Esophagus muscularis mucosa (tissue), 4 donors: ENCODE measurements at regions of chr5 and their contacts with region 1.

Region 1: GRCh38 chr5:172697123-172698121 is 56.4 kb downstream of the NEURL1B start:
- DNase-seq: peak; percentile 96
- H3K4me3 ChIP-seq: peak overlapping the region; percentile 46 to 79 (median 70)
- H3K27ac ChIP-seq: peak overlapping the region; percentile 70 to 84 (median 79)
- H3K4me1 ChIP-seq: peaks cover 64 to 76% (median 69%) of the 10 kb centered on the region in 4 donors
- H3K27me3 ChIP-seq: no peaks in the 10 kb centered on the region
- CTCF ChIP-seq: peak; percentile 92 to 95 (median 95)
- EP300 ChIP-seq: no peak
- POLR2A ChIP-seq: no peak

Region 2: GRCh38 chr5:172463031-172463430 is 234.4 kb before region 1 on chr5:
- intact Hi-C with region 1: loop called (anchors 5 kb)
- DNase-seq: no peak
- H3K4me3 ChIP-seq: no peak overlapping the region
- H3K27ac ChIP-seq: no peak overlapping the region
- H3K4me1 ChIP-seq: peaks cover 0 to 7% (median 0%) of the 10 kb centered on the region in 4 donors
- H3K27me3 ChIP-seq: no peaks in the 10 kb centered on the region
- CTCF ChIP-seq: no peak
- EP300 ChIP-seq: no peak
- POLR2A ChIP-seq: no peak

Region 3: GRCh38 chr5:172479044-172479783 is 218.2 kb before region 1 on chr5:
- intact Hi-C with region 1: loop called (anchors 1 kb)
- DNase-seq: no peak
- H3K4me3 ChIP-seq: no peak overlapping the region
- H3K27ac ChIP-seq: peak overlapping the region; percentile 44 to 58 (median 44)
- H3K4me1 ChIP-seq: peaks cover 9 to 14% (median 9%) of the 10 kb centered on the region in 4 donors
- H3K27me3 ChIP-seq: no peaks in the 10 kb centered on the region
- CTCF ChIP-seq: peak; percentile 78 to 98 (median 80)
- EP300 ChIP-seq: no peak
- POLR2A ChIP-seq: no peak

Region 4: GRCh38 chr5:172502969-172503368 is 194.5 kb before region 1 on chr5:
- intact Hi-C with region 1: no loop called
- DNase-seq: peak; percentile 91
- H3K4me3 ChIP-seq: no peak overlapping the region
- H3K27ac ChIP-seq: peak overlapping the region; percentile 43 to 76 (median 60)
- H3K4me1 ChIP-seq: peaks cover 14 to 23% (median 18%) of the 10 kb centered on the region in 4 donors
- H3K27me3 ChIP-seq: no peaks in the 10 kb centered on the region
- CTCF ChIP-seq: no peak
- EP300 ChIP-seq: no peak
- POLR2A ChIP-seq: no peak

Region 5: GRCh38 chr5:172640822-172641358 is 56.5 kb before region 1 on chr5 and contains the start of gene NEURL1B:
- intact Hi-C with region 1: loop called (anchors 2 kb)
- DNase-seq: no peak
- H3K4me3 ChIP-seq: peak within 1 kb of the TSS; percentile 68 to 98 (median 92)
- H3K27ac ChIP-seq: peak within 1 kb of the TSS; percentile 83 to 96 (median 94)
- H3K4me1 ChIP-seq: peaks cover 16 to 72% (median 65%) of the 10 kb centered on the region in 4 donors
- H3K27me3 ChIP-seq: no peaks in the 10 kb centered on the region
- CTCF ChIP-seq: peak in 2 of 3 experiments; percentile 21 to 43
- EP300 ChIP-seq: no peak
- POLR2A ChIP-seq: no peak
- total RNA-seq, gene NEURL1B: 34.1 to 87.1 (median 60.2) TPM

Region 6: GRCh38 chr5:172740428-172741201 is 43.2 kb after region 1 on chr5:
- intact Hi-C with region 1: no loop called
- DNase-seq: no peak
- H3K4me3 ChIP-seq: peak overlapping the region in 1 of 4 donors; percentile 12
- H3K27ac ChIP-seq: peak overlapping the region; percentile 90 to 98 (median 96)
- H3K4me1 ChIP-seq: peaks cover 31 to 82% (median 64%) of the 10 kb centered on the region in 4 donors
- H3K27me3 ChIP-seq: no peaks in the 10 kb centered on the region
- CTCF ChIP-seq: no peak
- EP300 ChIP-seq: peak; percentile 22
- POLR2A ChIP-seq: no peak